Mammary epithelial cell (primary cell): ENCODE measurements at regions of chr9 and their contacts with region 1.

Region 1: DNA sequence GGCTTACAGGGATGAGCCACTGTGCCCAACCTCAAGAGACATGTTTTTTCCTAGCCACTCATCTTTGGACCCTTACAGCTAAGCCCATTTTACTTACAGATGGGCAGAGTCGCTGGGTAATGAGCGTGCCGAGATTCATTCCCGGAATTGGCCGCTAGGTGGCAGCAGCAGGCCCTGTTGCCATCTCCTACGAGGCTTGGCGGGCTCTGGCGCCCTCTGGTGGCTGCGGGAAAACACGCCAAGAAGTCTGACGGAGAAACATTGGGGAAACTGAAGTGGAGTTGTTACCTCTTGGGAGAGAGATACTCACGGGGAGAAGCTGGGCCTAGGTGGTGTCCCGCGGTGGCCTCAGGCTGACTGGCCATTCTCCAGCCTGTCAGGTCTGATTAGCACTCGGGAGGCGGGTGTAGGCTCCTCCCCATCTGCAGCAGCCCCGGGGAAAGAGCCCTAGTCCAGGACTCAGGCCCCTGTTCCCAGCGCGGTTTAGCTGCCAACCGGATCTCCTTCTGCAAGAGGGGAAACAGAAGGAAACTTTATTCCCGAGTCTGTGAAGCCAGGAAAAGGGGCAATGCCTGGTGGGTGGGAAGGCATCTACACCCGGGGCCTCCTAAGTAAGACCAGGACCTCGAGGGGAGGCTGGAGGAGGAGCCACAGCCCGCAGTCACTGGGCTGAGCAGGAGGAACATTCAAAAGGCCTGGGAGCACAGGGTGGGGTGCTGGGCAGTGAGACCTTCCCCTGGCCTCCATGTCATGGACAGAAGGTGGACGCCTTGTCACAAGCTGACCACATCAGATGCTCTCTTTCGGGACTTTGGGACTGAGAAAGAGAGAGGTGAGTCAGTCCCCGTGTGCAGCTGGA is 9.7 kb downstream of the PTGES2 start:
- DNase-seq: peak; percentile 76
- H3K4me3 ChIP-seq: no peak overlapping the region
- H3K27ac ChIP-seq: no peak overlapping the region
- H3K4me1 ChIP-seq: no peaks in the 10 kb centered on the region
- H3K27me3 ChIP-seq: no peaks in the 10 kb centered on the region
- CTCF ChIP-seq: peak; percentile 100

Region 2: GRCh38 chr9:127943731-127944144 is 174.1 kb before region 1 on chr9:
- CTCF ChIA-PET with region 1: no interaction called
- dilution Hi-C with region 1: no loop called
- in situ Hi-C with region 1: no loop called
- intact Hi-C with region 1: loop called (anchors 1 kb)
- DNase-seq: peak; percentile 50
- H3K4me3 ChIP-seq: no peak overlapping the region
- H3K27ac ChIP-seq: no peak overlapping the region
- H3K4me1 ChIP-seq: peaks cover 3% of the 10 kb centered on the region
- H3K27me3 ChIP-seq: no peaks in the 10 kb centered on the region
- CTCF ChIP-seq: peak; percentile 81 to 94

Region 3: GRCh38 chr9:128053560-128053959 is 64.3 kb before region 1 on chr9:
- CTCF ChIA-PET with region 1: no interaction called
- dilution Hi-C with region 1: no loop called
- in situ Hi-C with region 1: no loop called
- intact Hi-C with region 1: loop called (anchors 5 kb)
- DNase-seq: no peak
- H3K4me3 ChIP-seq: no peak overlapping the region
- H3K27ac ChIP-seq: no peak overlapping the region
- H3K4me1 ChIP-seq: peaks cover 13% of the 10 kb centered on the region
- H3K27me3 ChIP-seq: no peaks in the 10 kb centered on the region
- CTCF ChIP-seq: no peak

Region 4: DNA sequence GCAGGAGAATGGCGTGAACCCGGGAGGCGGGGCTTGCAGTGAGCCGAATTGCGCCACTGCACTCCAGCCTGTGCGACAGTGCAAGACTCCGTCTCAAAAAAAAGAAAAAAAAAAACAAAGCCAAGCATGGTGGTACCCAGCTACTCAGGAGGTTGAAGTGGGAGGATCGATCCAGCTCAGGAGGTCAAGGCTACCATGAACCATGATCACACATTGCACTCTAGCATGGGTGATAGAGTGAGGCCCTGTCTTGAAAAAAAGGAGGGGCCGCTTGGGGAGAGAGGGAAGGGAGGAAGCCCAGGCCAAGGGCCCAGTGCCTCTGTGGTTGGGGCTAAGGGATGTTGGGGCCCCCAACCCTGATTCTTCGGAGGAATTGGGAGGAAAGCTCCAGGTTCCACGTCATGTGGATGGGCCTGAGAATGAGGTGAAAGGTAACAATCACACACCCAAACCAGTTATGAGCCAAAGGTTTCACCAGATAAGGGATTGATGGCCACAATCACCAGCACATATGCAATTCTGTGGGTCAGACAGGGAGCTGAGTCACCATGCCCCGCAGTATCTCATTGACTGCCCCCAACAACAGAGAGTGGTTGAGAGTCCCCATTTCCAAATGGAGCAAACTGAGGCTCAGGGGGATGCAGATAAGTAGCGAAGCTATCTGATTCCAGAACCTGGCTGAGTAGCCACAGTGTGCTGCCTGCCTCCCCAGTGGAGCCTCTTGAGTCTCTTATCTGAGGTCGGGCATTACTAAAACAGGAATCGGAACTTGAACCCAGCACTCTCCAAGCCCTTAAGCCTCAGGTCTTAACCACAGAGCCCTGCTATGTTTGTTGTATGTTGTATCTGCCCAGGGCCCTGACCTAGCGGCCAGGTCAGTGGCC is 178.7 kb after region 1 on chr9:
- CTCF ChIA-PET with region 1: no interaction called
- dilution Hi-C with region 1: no loop called
- in situ Hi-C with region 1: no loop called
- intact Hi-C with region 1: no loop called
- DNase-seq: no peak
- H3K4me3 ChIP-seq: no peak overlapping the region
- H3K27ac ChIP-seq: no peak overlapping the region
- H3K4me1 ChIP-seq: no peaks in the 10 kb centered on the region
- H3K27me3 ChIP-seq: no peaks in the 10 kb centered on the region
- CTCF ChIP-seq: no peak